Dendritic cell treated with granulocyte-macrophage colony-stimulating factor and Interleukin-4, amounts not matched to agents 40 ng/mL and 50 ng/mL, for 4 days (primary cell): ENCODE measurements at regions of chr3 and their contacts with region 1.

Region 1: GRCh38 chr3:192917404-192918274 is at the start of gene MB21D2:
- H3K4me3 Mint-ChIP-seq: peak within 1 kb of the TSS; percentile 91
- H3K27ac Mint-ChIP-seq: peak within 1 kb of the TSS; percentile 92
- H3K4me1 Mint-ChIP-seq: peaks cover 44% of the 10 kb centered on the region
- H3K27me3 Mint-ChIP-seq: peaks cover 28% of the 10 kb centered on the region

Region 2: DNA sequence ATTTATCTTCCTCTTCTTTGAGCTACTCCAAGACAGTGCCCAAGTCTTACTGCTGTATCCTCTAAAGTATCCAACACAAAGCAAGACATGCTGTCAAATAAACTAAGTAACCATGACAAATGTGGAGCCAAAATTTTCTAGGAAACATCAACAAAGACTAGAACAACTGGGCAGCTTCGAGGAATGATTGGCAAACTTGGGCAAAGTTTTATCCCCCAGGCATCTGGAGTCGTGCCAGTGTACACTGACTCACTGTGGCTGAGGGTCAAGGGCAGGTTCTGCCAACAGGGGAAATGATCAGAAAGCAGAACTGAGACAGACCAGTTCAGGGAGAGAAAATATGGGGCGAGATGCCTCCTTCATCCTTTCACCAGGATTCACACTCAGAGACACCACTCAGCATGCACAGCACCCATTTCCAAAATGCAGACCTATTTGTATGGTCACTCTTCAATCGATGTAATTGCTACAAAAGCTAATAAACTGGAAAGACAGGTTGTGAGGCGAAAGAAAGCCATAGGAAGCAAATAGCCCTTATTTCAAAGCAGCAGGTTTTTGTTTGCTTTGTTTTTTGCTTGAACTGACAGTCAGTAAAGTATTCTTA is 65.7 kb before region 1 on chr3:
- intact Hi-C with region 1: loop called (anchors 5 kb)
- H3K4me3 Mint-ChIP-seq: no peak overlapping the region
- H3K27ac Mint-ChIP-seq: peak overlapping the region; percentile 5
- H3K4me1 Mint-ChIP-seq: peaks cover 43% of the 10 kb centered on the region
- H3K27me3 Mint-ChIP-seq: peaks cover 7% of the 10 kb centered on the region

Region 3: GRCh38 chr3:192899540-192899982 is 18.1 kb before region 1 on chr3:
- intact Hi-C with region 1: loop called (anchors 2 kb)
- H3K4me3 Mint-ChIP-seq: no peak overlapping the region
- H3K27ac Mint-ChIP-seq: peak overlapping the region; percentile 78
- H3K4me1 Mint-ChIP-seq: peaks cover 81% of the 10 kb centered on the region
- H3K27me3 Mint-ChIP-seq: no peaks in the 10 kb centered on the region

Region 4: DNA sequence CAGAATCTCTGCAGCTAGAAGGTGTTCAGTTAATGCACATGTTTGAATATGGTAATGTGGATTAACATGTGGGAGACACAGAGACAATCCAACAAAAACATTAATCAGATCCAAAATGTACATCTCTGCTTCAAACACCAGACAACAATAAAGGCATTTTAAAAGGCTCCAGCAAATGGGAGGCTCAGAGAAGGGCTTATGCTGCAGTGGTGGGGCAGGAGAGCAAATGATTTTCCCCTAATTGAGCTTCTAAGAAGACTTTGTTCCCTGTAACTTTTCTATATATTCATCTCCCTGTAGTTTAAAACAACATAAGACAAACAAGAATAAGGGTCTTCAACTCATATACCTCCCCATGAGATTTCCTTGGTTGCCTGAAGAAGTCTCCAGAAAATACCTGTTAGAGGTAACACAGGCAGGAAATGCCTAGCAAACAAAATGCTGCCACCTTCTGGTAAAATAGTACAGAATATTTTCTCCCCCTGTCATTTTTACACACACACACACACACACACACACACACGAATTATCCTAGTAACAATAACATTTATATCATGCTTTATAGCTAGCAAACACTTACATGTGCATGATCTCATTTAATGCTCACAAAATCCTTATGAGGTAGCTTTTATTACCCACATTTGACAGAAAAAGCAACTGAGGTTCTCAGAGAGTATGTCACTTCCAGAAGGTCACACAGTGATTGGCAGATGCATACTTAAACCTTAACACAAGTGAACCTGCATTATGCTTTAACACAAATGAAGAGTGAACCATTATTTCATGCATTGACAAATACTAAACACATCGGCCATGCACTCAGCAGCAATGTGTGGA is 123.4 kb after region 1 on chr3:
- intact Hi-C with region 1: loop called (anchors 5 kb)
- H3K4me3 Mint-ChIP-seq: no peak overlapping the region
- H3K27ac Mint-ChIP-seq: no peak overlapping the region
- H3K4me1 Mint-ChIP-seq: no peaks in the 10 kb centered on the region
- H3K27me3 Mint-ChIP-seq: no peaks in the 10 kb centered on the region